ENCODE measurements at regions of chr1 and their contacts with region 1.

Region 1: GRCh38 chr1:179251675-179252074 is 22.2 kb upstream of the ABL2 start:
- DNase-seq: peak in 1 of 2 experiments; percentile 52
- H3K4me3 ChIP-seq: no peak overlapping the region
- H3K4me3 Mint-ChIP-seq: no peak overlapping the region
- H3K27ac Mint-ChIP-seq: no peak overlapping the region
- H3K4me1 ChIP-seq: no peaks in the 10 kb centered on the region
- H3K4me1 Mint-ChIP-seq: no peaks in the 10 kb centered on the region
- H3K27me3 ChIP-seq: no peaks in the 10 kb centered on the region
- H3K27me3 Mint-ChIP-seq: no peaks in the 10 kb centered on the region
- CTCF ChIP-seq: peak; percentile 61 to 65

Region 2: GRCh38 chr1:179241523-179242097 is 10.1 kb before region 1 on chr1:
- CTCF ChIA-PET with region 1: no interaction called
- POLR2A ChIA-PET with region 1: no interaction called
- intact Hi-C with region 1: no loop called
- DNase-seq: no peak
- H3K4me3 ChIP-seq: no peak overlapping the region
- H3K4me3 Mint-ChIP-seq: no peak overlapping the region
- H3K27ac Mint-ChIP-seq: no peak overlapping the region
- H3K4me1 ChIP-seq: no peaks in the 10 kb centered on the region
- H3K4me1 Mint-ChIP-seq: no peaks in the 10 kb centered on the region
- H3K27me3 ChIP-seq: no peaks in the 10 kb centered on the region
- H3K27me3 Mint-ChIP-seq: no peaks in the 10 kb centered on the region
- CTCF ChIP-seq: no peak

Region 3: DNA sequence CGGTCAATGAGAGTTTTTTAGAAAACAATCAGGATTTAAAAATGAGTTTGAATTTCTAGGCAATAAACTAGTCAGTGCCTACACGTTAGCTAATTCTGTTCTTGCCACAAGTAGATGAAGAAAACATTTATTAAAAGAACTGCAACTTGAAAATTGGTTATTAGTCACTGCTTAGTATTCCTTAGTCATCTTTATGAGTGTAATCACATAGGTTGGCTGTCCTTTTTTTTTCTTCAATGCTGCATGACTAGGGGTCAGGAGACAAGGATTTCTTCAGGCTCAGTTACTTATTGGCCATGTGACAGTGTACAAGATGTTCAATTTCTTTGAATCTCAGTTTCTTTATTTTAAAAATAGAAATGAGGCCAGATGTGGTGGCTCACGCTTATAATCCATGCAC is 59.0 kb after region 1 on chr1:
- CTCF ChIA-PET with region 1: no interaction called
- POLR2A ChIA-PET with region 1: no interaction called
- intact Hi-C with region 1: loop called (anchors 5 kb)
- DNase-seq: no peak
- H3K4me3 ChIP-seq: no peak overlapping the region
- H3K4me3 Mint-ChIP-seq: no peak overlapping the region
- H3K27ac Mint-ChIP-seq: no peak overlapping the region
- H3K4me1 ChIP-seq: no peaks in the 10 kb centered on the region
- H3K4me1 Mint-ChIP-seq: no peaks in the 10 kb centered on the region
- H3K27me3 ChIP-seq: no peaks in the 10 kb centered on the region
- H3K27me3 Mint-ChIP-seq: no peaks in the 10 kb centered on the region
- CTCF ChIP-seq: no peak

Region 4: GRCh38 chr1:179365320-179366092 is 113.8 kb after region 1 on chr1 and contains the start of gene AXDND1:
- CTCF ChIA-PET with region 1: interaction called, 11 read pairs
- POLR2A ChIA-PET with region 1: no interaction called
- intact Hi-C with region 1: loop called (anchors 1 kb)
- DNase-seq: peak; percentile 86 to 87
- H3K4me3 ChIP-seq: peak within 1 kb of the TSS; percentile 70
- H3K4me3 Mint-ChIP-seq: peak within 1 kb of the TSS; percentile 98
- H3K27ac Mint-ChIP-seq: peak within 1 kb of the TSS; percentile 99
- H3K4me1 ChIP-seq: peaks cover 15% of the 10 kb centered on the region
- H3K4me1 Mint-ChIP-seq: no peaks in the 10 kb centered on the region
- H3K27me3 ChIP-seq: no peaks in the 10 kb centered on the region
- H3K27me3 Mint-ChIP-seq: no peaks in the 10 kb centered on the region
- CTCF ChIP-seq: peak; percentile 14 to 54
- total RNA-seq, gene AXDND1: not detected in 2 replicates

Region 5: DNA sequence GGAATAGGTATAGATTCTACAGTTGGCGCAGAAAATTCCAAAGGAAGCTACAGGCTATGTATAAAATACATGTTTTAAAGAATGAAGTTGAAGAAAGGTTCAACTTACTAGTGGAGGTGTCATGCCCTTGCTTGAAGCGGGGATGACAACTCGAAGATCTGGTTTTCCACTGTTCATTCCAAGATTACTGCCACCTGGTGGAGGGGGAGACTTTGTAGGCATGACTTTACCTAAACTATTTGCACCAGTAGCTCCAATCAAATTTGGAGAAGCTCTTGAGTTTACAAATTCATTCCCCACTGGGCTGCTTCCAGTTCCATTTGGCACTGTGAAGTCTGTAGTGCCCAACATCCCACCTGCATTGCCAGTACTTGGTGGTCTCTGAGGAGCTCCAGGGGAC is 195.8 kb after region 1 on chr1:
- CTCF ChIA-PET with region 1: interaction called, 11 read pairs
- POLR2A ChIA-PET with region 1: no interaction called
- intact Hi-C with region 1: loop called (anchors 1 kb)
- DNase-seq: peak; percentile 44 to 62
- H3K4me3 ChIP-seq: no peak overlapping the region
- H3K4me3 Mint-ChIP-seq: no peak overlapping the region
- H3K27ac Mint-ChIP-seq: no peak overlapping the region
- H3K4me1 ChIP-seq: no peaks in the 10 kb centered on the region
- H3K4me1 Mint-ChIP-seq: no peaks in the 10 kb centered on the region
- H3K27me3 ChIP-seq: no peaks in the 10 kb centered on the region
- H3K27me3 Mint-ChIP-seq: peaks cover 3% of the 10 kb centered on the region
- CTCF ChIP-seq: peak; percentile 40 to 58

Region 6: DNA sequence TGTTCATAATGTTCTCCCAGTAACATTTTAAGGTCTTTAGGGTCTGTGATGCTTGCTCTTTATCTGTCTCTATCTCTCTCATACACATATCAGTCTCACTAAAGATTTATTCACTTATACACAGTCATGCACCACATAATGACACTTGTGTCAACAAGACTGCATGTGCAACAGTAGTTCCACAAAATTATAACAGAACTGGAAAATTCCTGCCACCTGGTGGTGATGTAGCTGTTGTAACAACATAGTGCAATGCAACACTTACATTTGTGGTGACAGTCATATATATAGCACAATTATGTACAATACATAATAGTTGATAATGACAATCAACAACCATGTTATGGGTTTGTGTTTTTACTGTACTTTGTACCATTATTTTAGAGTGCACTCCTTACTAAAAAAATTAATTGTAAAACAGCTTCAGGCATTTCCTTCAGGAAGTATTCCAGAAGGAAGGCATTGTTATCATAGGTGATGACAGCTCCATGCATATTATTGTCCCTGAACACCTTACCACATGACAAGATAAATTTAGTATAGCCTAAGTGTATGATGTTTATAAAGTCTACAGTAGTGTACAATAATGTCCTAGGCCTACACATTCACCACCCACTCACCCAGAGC is 348.1 kb after region 1 on chr1:
- CTCF ChIA-PET with region 1: interaction called, 5 read pairs
- POLR2A ChIA-PET with region 1: no interaction called
- intact Hi-C with region 1: loop called (anchors 1 kb)
- DNase-seq: peak in 1 of 2 experiments; percentile 60
- H3K4me3 ChIP-seq: no peak overlapping the region
- H3K4me3 Mint-ChIP-seq: no peak overlapping the region
- H3K27ac Mint-ChIP-seq: no peak overlapping the region
- H3K4me1 ChIP-seq: no peaks in the 10 kb centered on the region
- H3K4me1 Mint-ChIP-seq: peaks cover 7% of the 10 kb centered on the region
- H3K27me3 ChIP-seq: no peaks in the 10 kb centered on the region
- H3K27me3 Mint-ChIP-seq: peaks cover 9% of the 10 kb centered on the region
- CTCF ChIP-seq: peak; percentile 50 to 53

Measured in Caco-2 (cell line).